Sciatic nerve (tissue), 2 donors: ENCODE measurements at regions of chr1 and their contacts with region 1.

Region 1: DNA sequence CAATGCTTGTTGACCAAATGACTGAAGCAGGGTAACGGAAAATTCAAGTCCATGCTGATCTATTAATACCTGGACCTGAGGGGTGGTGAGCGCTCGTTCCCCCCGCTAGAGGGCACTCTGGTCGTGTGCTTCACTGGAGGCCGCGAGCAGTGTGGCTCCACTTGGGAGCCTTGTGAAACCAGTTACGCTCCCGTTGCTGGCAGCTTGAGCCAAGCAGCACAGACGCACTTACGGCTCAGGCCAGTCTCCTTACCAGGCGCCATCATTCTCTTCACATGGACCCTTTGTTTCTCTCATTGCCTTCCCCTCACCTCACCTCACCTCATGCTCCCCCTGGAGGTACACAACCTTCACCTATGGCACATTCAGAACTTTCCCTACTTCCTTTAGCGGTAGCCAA is 49.7 kb upstream of the TSPAN2 start:
- DNase-seq: peak; percentile 92
- ATAC-seq: peak; percentile 96

Region 2: GRCh38 chr1:115469703-115470476 is 330.9 kb after region 1 on chr1:
- intact Hi-C with region 1: loop called (anchors 2 kb)
- DNase-seq: no peak
- ATAC-seq: peak; percentile 79

Region 3: GRCh38 chr1:115595279-115596079 is 456.5 kb after region 1 on chr1:
- intact Hi-C with region 1: loop called (anchors 10 kb)
- DNase-seq: peak; percentile 96
- ATAC-seq: peak; percentile 84